ENCODE measurements at regions of chr4 and their contacts with region 1.

Region 1: GRCh38 chr4:124334119-124334518 is 378.4 kb downstream of the ANKRD50 start:
- DNase-seq: no peak
- H3K4me3 ChIP-seq: no peak overlapping the region
- H3K27ac ChIP-seq: no peak overlapping the region
- H3K4me1 ChIP-seq: peaks cover 0 to 4% (median 0%) of the 10 kb centered on the region in 3 donors
- H3K27me3 ChIP-seq: no peaks in the 10 kb centered on the region
- CTCF ChIP-seq: peak in 5 of 6 experiments; percentile 39 to 74 (median 49)
- POLR2A ChIP-seq: no peak

Region 2: DNA sequence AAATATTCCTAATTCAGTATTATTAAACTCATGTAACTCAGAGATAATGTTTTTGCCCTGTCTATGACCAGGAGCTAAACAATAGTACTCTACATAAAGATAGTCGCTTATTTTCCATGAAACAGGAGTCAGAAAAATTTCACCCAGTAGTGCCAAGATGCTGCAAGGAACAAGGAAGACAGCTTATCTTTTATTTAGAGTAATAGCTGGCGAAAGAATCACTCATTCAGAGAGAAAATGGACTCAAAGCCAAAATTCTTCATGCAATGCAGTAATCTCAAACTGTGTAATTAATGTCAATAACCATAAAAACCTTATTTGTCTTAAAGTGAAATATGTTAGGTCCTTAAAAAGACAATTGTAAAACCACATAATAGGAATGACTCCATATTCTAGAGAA is 99.3 kb before region 1 on chr4:
- intact Hi-C with region 1: no loop called
- DNase-seq: no peak
- H3K4me3 ChIP-seq: no peak overlapping the region
- H3K27ac ChIP-seq: no peak overlapping the region
- H3K4me1 ChIP-seq: peaks cover 0 to 5% (median 0%) of the 10 kb centered on the region in 3 donors
- H3K27me3 ChIP-seq: no peaks in the 10 kb centered on the region
- CTCF ChIP-seq: no peak
- POLR2A ChIP-seq: no peak

Region 3: DNA sequence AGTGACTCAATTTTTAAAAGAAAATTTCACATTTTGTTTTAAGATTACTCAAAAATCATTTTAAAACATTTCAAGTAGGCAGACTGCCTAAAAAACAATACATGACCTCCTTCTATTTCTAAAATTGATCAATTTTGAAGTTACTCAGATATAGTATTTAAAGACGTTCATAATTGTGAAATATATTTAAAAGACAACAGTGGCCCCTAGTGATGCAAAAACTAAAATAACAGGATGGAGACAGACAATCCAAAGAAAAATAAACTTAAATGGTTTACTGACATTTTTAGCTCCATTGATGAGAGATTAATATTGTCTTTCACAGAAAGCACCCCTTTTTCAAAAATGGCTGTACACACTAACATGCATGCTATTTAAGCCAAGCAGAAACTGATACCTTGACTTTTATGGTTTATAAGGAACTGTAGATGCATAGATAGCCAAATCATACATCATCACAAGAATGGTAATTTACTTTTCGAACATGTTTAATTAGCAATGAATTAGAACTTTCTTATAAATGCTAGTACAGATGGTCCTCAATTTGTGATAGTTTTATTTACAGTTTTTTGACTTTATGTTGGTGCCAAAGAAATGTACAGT is 910.8 kb after region 1 on chr4:
- intact Hi-C with region 1: loop called (anchors 10 kb)
- DNase-seq: no peak
- H3K4me3 ChIP-seq: no peak overlapping the region
- H3K27ac ChIP-seq: no peak overlapping the region
- H3K4me1 ChIP-seq: peaks cover 0 to 8% (median 0%) of the 10 kb centered on the region in 3 donors
- H3K27me3 ChIP-seq: no peaks in the 10 kb centered on the region
- CTCF ChIP-seq: peak in 3 of 6 experiments; percentile 17 to 55 (median 34)
- POLR2A ChIP-seq: no peak

Measured in esophagus squamous epithelium (tissue), 5 donors.